ENCODE measurements at regions of chr20 and their contacts with region 1.

Region 1: GRCh38 chr20:2729251-2729713 is 36.7 kb downstream of the EBF4 start:
- DNase-seq: peak; percentile 52 to 65 (median 58)
- H3K4me3 ChIP-seq: peak overlapping the region in 1 of 2 donors; percentile 0
- H3K4me3 Mint-ChIP-seq: peak overlapping the region; percentile 59 to 86 (median 71)
- H3K27ac ChIP-seq: peak overlapping the region; percentile 33
- H3K27ac Mint-ChIP-seq: peak overlapping the region; percentile 82 to 96 (median 95)
- H3K4me1 ChIP-seq: peaks cover 26% of the 10 kb centered on the region
- H3K4me1 Mint-ChIP-seq: peaks cover 10 to 31% (median 22%) of the 10 kb centered on the region in 4 donors
- H3K27me3 ChIP-seq: no peaks in the 10 kb centered on the region
- H3K27me3 Mint-ChIP-seq: peaks cover 0 to under 1% of the 10 kb centered on the region in 2 donors

Region 2: DNA sequence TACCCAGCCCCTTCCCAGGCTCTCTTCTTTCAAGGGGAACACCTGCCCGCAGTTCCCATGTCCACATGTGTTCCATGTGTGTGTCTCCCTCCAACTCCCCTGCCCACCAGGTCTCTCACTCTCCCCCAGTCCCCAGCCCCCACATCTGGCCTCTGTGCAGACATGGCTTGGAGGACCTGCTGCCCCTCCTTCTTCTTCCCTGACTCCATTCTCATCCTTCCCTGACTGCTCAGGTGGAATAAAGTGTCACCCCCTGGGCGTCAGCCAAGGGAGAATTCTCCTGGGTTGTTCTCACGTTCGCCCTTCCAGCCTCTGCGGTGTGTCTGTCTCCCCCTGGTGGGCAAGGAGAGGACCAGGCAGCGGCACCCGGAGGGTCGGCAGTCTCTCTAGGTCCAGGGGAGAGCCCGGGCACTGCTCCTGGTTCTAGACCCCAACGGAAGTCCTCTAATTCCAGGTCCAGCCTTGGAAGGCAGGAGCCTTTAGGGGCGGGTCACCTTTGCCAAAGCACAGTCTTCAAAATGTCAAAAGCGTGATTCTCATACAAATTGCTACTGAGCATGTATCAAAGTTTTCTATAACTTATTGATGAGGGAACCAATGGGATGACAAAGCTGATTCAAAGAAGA is 13.8 kb after region 1 on chr20:
- CTCF ChIA-PET with region 1: interaction called, 191 read pairs
- POLR2A ChIA-PET with region 1: interaction called, 163 read pairs
- intact Hi-C with region 1: loop called (anchors 1 kb)
- DNase-seq: peak; percentile 68 to 80 (median 74)
- H3K4me3 ChIP-seq: no peak overlapping the region
- H3K4me3 Mint-ChIP-seq: peak overlapping the region; percentile 56 to 94 (median 72)
- H3K27ac ChIP-seq: peak overlapping the region; percentile 42
- H3K27ac Mint-ChIP-seq: peak overlapping the region; percentile 84 to 98 (median 93)
- H3K4me1 ChIP-seq: peaks cover 42% of the 10 kb centered on the region
- H3K4me1 Mint-ChIP-seq: peaks cover 37 to 56% (median 44%) of the 10 kb centered on the region in 4 donors
- H3K27me3 ChIP-seq: no peaks in the 10 kb centered on the region
- H3K27me3 Mint-ChIP-seq: no peaks in the 10 kb centered on the region

Region 3: DNA sequence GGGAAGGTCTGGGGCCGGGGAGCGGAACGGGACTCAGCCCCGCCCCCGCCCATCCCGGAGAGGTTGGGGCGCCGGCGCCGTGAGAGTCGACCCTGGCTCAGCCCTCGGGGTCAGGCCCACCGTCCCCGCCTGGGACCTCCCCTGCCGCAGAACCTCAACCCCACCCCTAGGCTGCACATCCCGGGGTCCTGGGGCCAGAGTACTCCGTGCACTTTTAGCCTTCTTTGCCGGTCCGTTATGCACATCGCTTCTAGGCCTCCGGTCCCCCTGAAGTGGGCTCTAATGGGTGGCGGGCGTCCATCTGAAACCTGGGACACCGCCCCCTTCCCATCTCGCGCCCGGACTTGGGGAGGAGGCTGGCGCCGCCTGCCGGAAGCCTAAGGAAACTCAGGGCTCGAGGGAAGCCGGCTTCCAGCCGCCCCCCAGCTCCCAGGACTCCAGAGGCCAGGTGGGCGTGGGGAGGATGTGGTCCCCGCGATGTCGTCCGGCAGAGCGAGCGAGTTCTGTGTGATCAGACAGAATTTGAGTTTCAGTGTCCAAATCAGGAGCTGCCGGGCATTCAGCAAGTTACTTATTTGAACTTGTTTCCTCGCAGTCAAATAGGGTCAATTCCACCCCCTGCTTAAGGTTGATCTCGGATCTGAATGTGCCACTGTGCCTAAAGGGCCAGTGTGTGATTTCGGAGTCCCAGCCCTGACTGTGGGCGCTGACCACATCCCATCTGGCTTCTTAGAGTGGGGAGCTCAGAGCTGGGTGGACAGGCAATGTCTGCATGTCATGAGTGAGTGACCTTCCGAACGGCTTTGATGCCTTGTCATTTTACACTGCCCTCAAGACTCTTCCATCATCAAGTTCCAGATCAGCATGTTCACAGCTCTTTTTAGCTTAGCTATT is 23.5 kb after region 1 on chr20:
- CTCF ChIA-PET with region 1: interaction called, 16 read pairs
- POLR2A ChIA-PET with region 1: interaction called, 25 read pairs
- intact Hi-C with region 1: no loop called
- DNase-seq: peak in 4 of 5 donors; percentile 48 to 55 (median 52)
- H3K4me3 ChIP-seq: peak overlapping the region; percentile 28 to 33
- H3K4me3 Mint-ChIP-seq: peak overlapping the region; percentile 81 to 89 (median 86)
- H3K27ac ChIP-seq: no peak overlapping the region
- H3K27ac Mint-ChIP-seq: peak overlapping the region; percentile 57 to 90 (median 74)
- H3K4me1 ChIP-seq: peaks cover 27% of the 10 kb centered on the region
- H3K4me1 Mint-ChIP-seq: peaks cover 16 to 40% (median 28%) of the 10 kb centered on the region in 4 donors
- H3K27me3 ChIP-seq: peaks cover 5% of the 10 kb centered on the region
- H3K27me3 Mint-ChIP-seq: peaks cover 2 to 9% of the 10 kb centered on the region in 2 donors

Measured in CD4-positive, alpha-beta memory T cell (primary cell).